ENCODE measurements at regions of chr17 and their contacts with region 1.

Region 1: DNA sequence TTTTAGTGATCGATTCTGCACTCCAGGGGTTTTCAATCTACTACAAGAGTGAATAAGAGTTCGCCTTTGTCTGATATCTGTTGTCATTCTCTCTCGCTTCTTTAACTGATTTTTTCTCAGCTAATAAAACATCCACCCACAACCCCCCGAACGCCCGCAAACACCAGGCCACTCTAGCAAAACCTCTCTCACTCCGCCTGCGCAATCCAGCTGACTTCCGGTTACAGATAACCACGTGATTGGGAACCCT is 338 bp upstream of the RPL19 start:
- DNase-seq: peak; percentile 97
- H3K4me3 ChIP-seq: peak overlapping the region; percentile 82 to 96 (median 88)
- H3K27ac ChIP-seq: peak overlapping the region; percentile 91 to 99 (median 94)
- H3K4me1 ChIP-seq: peaks cover 0 to 64% (median 54%) of the 10 kb centered on the region in 4 donors
- H3K27me3 ChIP-seq: no peaks in the 10 kb centered on the region
- CTCF ChIP-seq: no peak
- EP300 ChIP-seq: no peak
- POLR2A ChIP-seq: no peak

Region 2: GRCh38 chr17:39213852-39214251 is 14.1 kb after region 1 on chr17:
- intact Hi-C with region 1: no loop called
- DNase-seq: no peak
- H3K4me3 ChIP-seq: no peak overlapping the region
- H3K27ac ChIP-seq: no peak overlapping the region
- H3K4me1 ChIP-seq: peaks cover 0 to 18% (median 17%) of the 10 kb centered on the region in 4 donors
- H3K27me3 ChIP-seq: peaks cover 0 to 30% (median 5%) of the 10 kb centered on the region in 3 donors
- CTCF ChIP-seq: no peak
- EP300 ChIP-seq: no peak
- POLR2A ChIP-seq: no peak

Region 3: DNA sequence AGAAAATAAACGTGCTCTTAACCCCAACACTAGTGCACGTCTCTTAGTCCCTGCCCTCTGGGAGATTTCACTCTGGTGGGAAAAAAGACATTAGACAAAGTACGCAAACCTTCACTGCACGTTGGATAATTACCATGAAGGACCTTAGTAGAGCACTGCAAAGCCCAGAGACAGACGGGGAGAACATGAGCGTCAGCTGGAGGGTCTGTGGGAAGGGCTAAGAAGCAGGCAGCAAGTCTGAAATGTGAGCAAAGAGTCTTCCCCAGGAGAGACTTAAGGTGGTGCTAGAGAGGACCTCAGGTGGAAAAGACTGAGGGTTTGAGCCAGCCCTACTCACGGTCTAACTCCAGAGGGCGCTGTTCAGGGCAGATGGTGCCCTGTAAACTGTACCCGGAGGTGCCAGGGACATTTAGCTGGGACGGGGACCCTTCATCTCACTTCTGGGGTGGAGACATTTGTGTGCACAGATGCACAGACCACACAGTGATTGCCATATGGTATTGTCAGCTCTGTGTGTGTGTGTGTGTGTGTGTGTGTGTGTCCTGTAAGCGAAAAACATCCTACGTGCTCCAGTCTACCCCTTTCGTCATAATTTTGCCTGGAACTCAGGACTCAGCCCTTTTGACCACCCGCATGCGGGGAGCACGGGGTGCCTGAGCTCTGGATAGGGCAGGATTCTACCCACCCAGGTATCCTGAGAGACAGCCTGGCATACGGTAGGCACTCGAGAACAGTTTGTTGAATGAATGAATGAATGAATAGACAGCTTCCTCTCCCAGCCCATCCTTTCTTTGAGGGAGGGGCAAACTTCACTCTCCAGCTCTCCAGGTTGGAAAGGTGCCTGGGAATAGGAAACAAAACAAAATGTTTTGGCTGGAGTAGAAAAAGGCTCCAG is 36.1 kb after region 1 on chr17:
- intact Hi-C with region 1: no loop called
- DNase-seq: no peak
- H3K4me3 ChIP-seq: no peak overlapping the region
- H3K27ac ChIP-seq: no peak overlapping the region
- H3K4me1 ChIP-seq: peaks cover 0 to 13% (median 10%) of the 10 kb centered on the region in 4 donors
- H3K27me3 ChIP-seq: peaks cover 12 to 69% (median 32%) of the 10 kb centered on the region in 3 donors
- CTCF ChIP-seq: no peak
- EP300 ChIP-seq: no peak
- POLR2A ChIP-seq: no peak

Region 4: GRCh38 chr17:39401412-39402243 is 201.9 kb after region 1 on chr17 and contains the start of gene FBXL20:
- intact Hi-C with region 1: loop called (anchors 5 kb)
- DNase-seq: peak; percentile 96
- H3K4me3 ChIP-seq: peak within 1 kb of the TSS; percentile 78 to 98 (median 94)
- H3K27ac ChIP-seq: peak within 1 kb of the TSS; percentile 90 to 94 (median 91)
- H3K4me1 ChIP-seq: peaks cover 0 to 30% (median 22%) of the 10 kb centered on the region in 4 donors
- H3K27me3 ChIP-seq: no peaks in the 10 kb centered on the region
- CTCF ChIP-seq: no peak
- EP300 ChIP-seq: no peak
- POLR2A ChIP-seq: peak; percentile 65 to 77
- total RNA-seq, gene FBXL20: 17.0 to 26.0 (median 20.0) TPM

Measured in sigmoid colon (tissue), 7 donors.